Activated naive CD4-positive, alpha-beta T cell treated with anti-CD3 and anti-CD28 coated beads for 36 hours (primary cell): ENCODE measurements at regions of chr20 and their contacts with region 1.

Region 1: GRCh38 chr20:24100385-24101011 is 111.9 kb upstream of the GGTLC1 start:
- DNase-seq: peak; percentile 76
- H3K4me3 Mint-ChIP-seq: no peak overlapping the region
- H3K27ac Mint-ChIP-seq: peak overlapping the region; percentile 77
- H3K4me1 Mint-ChIP-seq: peaks cover 33% of the 10 kb centered on the region
- H3K27me3 Mint-ChIP-seq: peaks cover 5% of the 10 kb centered on the region

Region 2: DNA sequence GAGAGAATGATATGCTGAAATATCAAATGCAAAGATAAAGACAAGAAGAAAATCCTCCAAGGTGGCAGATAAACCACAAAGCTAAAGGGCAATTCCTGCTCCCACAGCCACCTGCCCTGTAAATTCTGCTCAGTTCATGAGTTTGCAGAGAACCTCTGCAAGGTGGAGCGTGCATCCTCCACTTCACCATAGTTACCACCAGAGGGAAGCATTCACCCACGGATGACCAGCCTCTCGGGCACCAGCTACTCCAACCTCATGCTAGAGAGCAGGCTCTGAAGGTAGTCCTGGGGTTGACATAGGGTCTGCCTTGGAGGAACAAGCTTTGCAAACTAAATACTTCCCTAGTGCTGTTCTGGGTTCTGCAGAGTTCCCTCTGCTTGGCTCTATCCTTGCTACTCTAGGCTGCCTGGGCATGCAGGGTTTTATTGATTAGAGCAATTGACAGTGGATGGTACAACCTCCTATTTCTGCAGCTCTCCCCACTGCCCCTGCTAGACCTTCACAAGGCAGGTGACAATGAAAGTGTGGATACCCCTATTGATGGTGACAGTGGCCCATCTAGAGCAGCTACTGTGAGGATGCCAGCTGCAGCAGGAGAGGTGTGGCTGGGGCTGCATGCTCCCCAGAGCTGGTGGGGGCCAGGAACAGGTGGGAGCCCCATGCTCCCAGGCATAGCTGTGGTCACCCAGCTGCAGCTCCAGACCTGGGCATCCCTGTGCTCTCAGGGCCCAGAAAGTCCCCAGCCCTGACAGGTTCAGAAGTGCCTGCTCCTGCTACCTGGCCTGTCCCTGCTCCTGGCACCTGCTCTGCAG is 163.0 kb before region 1 on chr20:
- CTCF ChIA-PET with region 1: interaction called, 7 read pairs
- intact Hi-C with region 1: loop called (anchors 1 kb)
- DNase-seq: peak; percentile 78
- H3K4me3 Mint-ChIP-seq: no peak overlapping the region
- H3K27ac Mint-ChIP-seq: no peak overlapping the region
- H3K4me1 Mint-ChIP-seq: no peaks in the 10 kb centered on the region
- H3K27me3 Mint-ChIP-seq: peaks cover 2% of the 10 kb centered on the region

Region 3: GRCh38 chr20:24027229-24027628 is 73.3 kb before region 1 on chr20:
- CTCF ChIA-PET with region 1: interaction called, 7 read pairs
- intact Hi-C with region 1: loop called (anchors 1 kb)
- DNase-seq: peak; percentile 90
- H3K4me3 Mint-ChIP-seq: peak overlapping the region; percentile 40
- H3K27ac Mint-ChIP-seq: peak overlapping the region; percentile 84
- H3K4me1 Mint-ChIP-seq: peaks cover 30% of the 10 kb centered on the region
- H3K27me3 Mint-ChIP-seq: no peaks in the 10 kb centered on the region

Region 4: GRCh38 chr20:24066076-24066700 is 34.3 kb before region 1 on chr20:
- CTCF ChIA-PET with region 1: interaction called, 5 read pairs
- intact Hi-C with region 1: loop called (anchors 2 kb)
- DNase-seq: peak; percentile 61
- H3K4me3 Mint-ChIP-seq: peak overlapping the region; percentile 55
- H3K27ac Mint-ChIP-seq: peak overlapping the region; percentile 75
- H3K4me1 Mint-ChIP-seq: peaks cover 13% of the 10 kb centered on the region
- H3K27me3 Mint-ChIP-seq: no peaks in the 10 kb centered on the region

Region 5: DNA sequence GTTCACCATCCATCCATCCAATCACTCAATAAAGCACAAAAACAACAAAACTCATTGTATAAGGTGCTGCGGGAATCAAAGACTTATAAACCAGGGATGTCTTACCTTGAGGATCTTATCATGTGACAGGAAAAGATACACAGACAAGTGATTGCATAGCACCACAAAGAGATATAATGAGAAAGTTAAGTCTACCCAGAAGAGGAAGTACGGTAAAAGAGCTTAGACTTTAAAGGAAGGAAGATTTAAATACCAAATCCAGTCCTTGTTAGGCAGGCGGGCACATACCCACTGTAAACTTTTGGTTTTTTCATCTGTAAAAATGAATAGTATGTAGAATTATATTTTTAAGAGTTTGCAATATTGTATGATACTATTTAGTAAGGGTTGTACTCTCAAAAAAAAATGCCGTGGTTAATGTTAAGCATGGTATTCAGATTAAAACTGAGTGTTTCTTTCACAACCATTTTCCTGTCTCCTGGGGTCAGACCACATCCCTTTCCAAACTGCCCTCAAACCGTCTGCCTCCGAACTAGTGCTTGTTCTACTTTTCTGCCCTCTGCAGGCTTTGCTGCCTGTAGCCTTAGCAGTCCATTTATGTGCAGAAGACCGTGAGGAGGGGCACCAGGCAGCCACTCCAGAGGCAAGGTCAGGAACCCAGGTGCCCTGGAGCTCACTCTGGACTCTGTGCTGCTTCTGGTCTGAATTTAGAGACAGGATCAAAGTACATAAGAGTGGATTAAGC is 189.4 kb after region 1 on chr20:
- CTCF ChIA-PET with region 1: no interaction called
- intact Hi-C with region 1: loop called (anchors 5 kb)
- DNase-seq: peak; percentile 60
- H3K4me3 Mint-ChIP-seq: no peak overlapping the region
- H3K27ac Mint-ChIP-seq: peak overlapping the region; percentile 37
- H3K4me1 Mint-ChIP-seq: peaks cover 24% of the 10 kb centered on the region
- H3K27me3 Mint-ChIP-seq: no peaks in the 10 kb centered on the region

Region 6: GRCh38 chr20:24781422-24781980 is 681.0 kb after region 1 on chr20:
- CTCF ChIA-PET with region 1: no interaction called
- intact Hi-C with region 1: loop called (anchors 2 kb)
- DNase-seq: peak; percentile 60
- H3K4me3 Mint-ChIP-seq: no peak overlapping the region
- H3K27ac Mint-ChIP-seq: no peak overlapping the region
- H3K4me1 Mint-ChIP-seq: no peaks in the 10 kb centered on the region
- H3K27me3 Mint-ChIP-seq: peaks cover 11% of the 10 kb centered on the region

Region 7: GRCh38 chr20:24948939-24949679 is 848.6 kb after region 1 on chr20 and contains the start of gene CST7:
- CTCF ChIA-PET with region 1: no interaction called
- intact Hi-C with region 1: loop called (anchors 10 kb)
- DNase-seq: peak; percentile 94
- H3K4me3 Mint-ChIP-seq: peak within 1 kb of the TSS; percentile 72
- H3K27ac Mint-ChIP-seq: peak within 1 kb of the TSS; percentile 96
- H3K4me1 Mint-ChIP-seq: peaks cover 40% of the 10 kb centered on the region
- H3K27me3 Mint-ChIP-seq: no peaks in the 10 kb centered on the region
- total RNA-seq, gene CST7: 37.8 to 43.1 TPM